Right ventricle myocardium inferior (tissue), 1 donor: ENCODE measurements at regions of chr7 and their contacts with region 1.

Region 1: DNA sequence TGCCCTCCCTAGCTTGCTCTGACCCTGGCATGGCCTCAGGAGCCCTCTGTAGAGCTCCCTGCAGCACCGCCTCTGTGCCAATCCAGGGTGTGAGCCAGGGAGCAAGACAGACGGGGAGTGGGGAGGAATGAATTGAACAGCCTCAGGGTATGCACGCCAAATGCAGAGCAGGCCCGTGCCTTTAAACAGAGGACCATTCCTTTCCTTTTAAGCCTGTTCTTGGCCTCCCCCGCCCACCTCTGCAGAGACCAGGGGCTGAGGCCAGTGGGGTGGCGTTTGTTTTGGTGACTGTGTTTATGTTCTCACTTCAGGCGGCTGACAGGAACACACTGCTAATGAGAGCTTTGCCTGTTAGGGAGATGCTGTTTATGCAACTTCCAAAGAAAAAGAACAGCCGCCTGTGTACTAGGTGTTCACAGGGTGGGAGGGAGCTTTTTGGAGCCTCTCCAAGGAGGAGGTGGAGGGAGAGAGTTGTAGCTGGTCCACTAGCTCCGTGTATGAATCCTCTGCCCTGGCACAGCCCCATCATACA is 528.1 kb upstream of the DPP6 start:
- DNase-seq: peak; percentile 79
- ATAC-seq: peak; percentile 85

Region 2: DNA sequence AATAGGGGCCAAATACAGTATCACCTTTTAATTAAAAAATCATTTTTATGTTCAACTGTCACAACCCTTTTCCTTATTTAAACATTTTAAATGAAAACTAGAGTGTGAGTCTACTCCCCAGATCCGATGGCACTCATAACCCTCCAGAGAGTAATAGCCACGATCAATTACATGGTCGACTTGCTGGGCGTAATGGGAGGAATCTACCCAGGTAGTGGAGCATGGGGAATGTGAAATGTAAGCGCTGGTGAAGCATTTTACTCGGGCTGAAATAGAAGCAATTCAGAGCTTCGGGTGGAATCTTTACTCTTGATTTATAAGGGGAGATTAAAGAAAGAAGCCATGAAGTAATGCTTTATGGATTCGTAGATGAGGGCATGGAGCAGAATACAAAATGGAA is 442.6 kb before region 1 on chr7:
- intact Hi-C with region 1: no loop called
- DNase-seq: no peak
- ATAC-seq: no peak

Region 3: GRCh38 chr7:153390955-153391354 is 133.2 kb before region 1 on chr7:
- intact Hi-C with region 1: loop called (anchors 2 kb)
- DNase-seq: no peak
- ATAC-seq: no peak

Region 4: DNA sequence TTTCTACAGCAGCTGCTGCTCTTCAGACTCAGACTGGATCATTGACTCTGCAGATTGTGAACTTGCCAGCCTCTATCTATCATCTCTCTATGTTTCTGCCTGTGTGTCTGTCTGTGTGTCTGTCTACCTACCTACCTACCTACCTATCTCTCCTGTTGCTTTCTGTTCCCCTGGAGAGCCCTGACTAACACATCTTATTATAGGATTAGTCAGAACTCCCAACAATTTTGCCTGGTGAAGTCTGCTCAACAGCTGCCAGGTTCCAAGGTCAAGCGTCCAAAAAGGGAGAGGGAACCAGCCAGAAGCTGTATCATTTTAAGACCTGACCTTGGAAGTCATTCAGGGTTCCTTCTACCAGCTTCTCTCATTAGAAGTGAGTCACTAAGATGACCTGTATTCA is 51.0 kb before region 1 on chr7:
- intact Hi-C with region 1: loop called (anchors 2 kb)
- DNase-seq: no peak
- ATAC-seq: peak; percentile 53

Region 5: GRCh38 chr7:153581419-153581818 is 57.3 kb after region 1 on chr7:
- intact Hi-C with region 1: no loop called
- DNase-seq: no peak
- ATAC-seq: peak; percentile 59

Region 6: GRCh38 chr7:153808117-153808516 is 284.0 kb after region 1 on chr7:
- intact Hi-C with region 1: no loop called
- DNase-seq: no peak
- ATAC-seq: no peak